IMR-90 (cell line): ENCODE measurements at regions of chr7 and their contacts with region 1.

Region 1: GRCh38 chr7:17971411-17971810 is 31.1 kb upstream of the SNX13 start:
- DNase-seq: peak; percentile 33
- ATAC-seq: no peak
- H3K4me3 ChIP-seq: no peak overlapping the region
- H3K27ac ChIP-seq: no peak overlapping the region
- H3K4me1 ChIP-seq: no peaks in the 10 kb centered on the region
- H3K27me3 ChIP-seq: no peaks in the 10 kb centered on the region; the same call in 1 of the 2 replicates
- CTCF ChIP-seq: peak; percentile 46
- POLR2A ChIP-seq: no peak
- RAD21 ChIP-seq: peak; percentile 44

Region 2: DNA sequence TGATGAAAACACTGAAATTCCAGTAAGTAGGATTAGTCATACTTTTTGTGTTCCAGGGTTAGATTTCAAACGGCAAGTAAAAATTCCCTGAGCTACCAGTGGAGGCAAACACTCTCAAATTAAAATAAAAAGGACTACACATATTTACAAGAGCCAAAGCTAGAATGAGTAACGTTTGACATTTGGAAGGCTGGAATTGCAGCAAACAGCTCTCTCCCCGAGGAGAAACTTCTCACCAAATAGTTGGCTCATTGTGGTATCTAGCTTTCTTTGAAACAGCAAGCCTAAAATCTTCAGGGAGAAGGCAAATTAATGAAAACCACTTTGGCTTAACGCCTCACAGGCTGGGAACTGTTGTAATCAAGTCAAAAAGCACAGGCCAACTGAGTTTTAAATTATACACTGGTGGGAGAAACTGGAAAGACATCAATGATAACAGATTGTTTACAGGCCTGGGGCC is 319.5 kb before region 1 on chr7:
- CTCF ChIA-PET with region 1: no interaction called
- POLR2A ChIA-PET with region 1: no interaction called
- dilution Hi-C with region 1: no loop called
- in situ Hi-C with region 1: no loop called
- intact Hi-C with region 1: no loop called
- DNase-seq: peak; percentile 90
- ATAC-seq: peak; percentile 94
- H3K4me3 ChIP-seq: no peak overlapping the region
- H3K27ac ChIP-seq: peak overlapping the region; percentile 66
- H3K4me1 ChIP-seq: peaks cover 13% of the 10 kb centered on the region
- H3K27me3 ChIP-seq: no peaks in the 10 kb centered on the region
- CTCF ChIP-seq: peak; percentile 46
- POLR2A ChIP-seq: no peak
- RAD21 ChIP-seq: peak; percentile 27

Region 3: DNA sequence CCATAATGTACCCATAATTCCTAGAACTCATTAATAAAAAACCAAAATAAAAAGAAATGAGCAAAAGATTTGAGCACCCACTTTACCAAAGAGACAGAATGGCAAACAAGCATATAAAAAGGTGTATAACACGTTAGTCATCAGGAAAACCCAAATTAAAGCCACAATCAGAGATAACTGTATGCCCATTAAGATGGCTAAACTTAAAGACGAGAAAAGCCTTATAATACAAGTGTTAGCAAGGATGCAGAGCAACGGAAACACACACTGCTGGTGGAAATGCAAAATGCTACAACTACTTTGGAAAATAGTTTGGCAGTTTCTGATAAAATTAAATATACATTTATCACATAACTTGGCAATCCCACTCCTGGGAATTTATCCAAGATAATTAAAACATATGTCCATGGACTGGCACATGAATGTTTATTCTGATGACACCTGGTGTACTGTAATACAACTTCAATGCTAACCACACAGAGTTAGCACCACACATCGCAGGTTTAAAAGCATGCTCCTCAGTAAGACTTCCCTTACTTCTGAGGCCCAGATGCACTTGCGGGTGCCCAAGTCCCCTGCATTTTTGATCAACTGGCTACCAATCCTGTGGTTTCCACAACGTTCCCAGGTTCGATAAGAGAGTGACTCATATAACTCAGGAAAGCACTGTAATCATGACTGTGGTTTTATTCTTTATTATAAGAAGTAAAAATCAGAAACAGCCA is 189.8 kb before region 1 on chr7:
- CTCF ChIA-PET with region 1: no interaction called
- POLR2A ChIA-PET with region 1: no interaction called
- dilution Hi-C with region 1: no loop called
- in situ Hi-C with region 1: no loop called
- intact Hi-C with region 1: no loop called
- DNase-seq: peak; percentile 90
- ATAC-seq: peak; percentile 74
- H3K4me3 ChIP-seq: no peak overlapping the region
- H3K27ac ChIP-seq: no peak overlapping the region
- H3K4me1 ChIP-seq: 0 out of 2 replicates have a peak, but pooled peaks cover 1% of the 10 kb centered on the region
- H3K27me3 ChIP-seq: no peaks in the 10 kb centered on the region
- CTCF ChIP-seq: no peak
- POLR2A ChIP-seq: no peak
- RAD21 ChIP-seq: no peak

Region 4: GRCh38 chr7:18096087-18096486 is 124.7 kb after region 1 on chr7:
- CTCF ChIA-PET with region 1: no interaction called
- POLR2A ChIA-PET with region 1: no interaction called
- dilution Hi-C with region 1: no loop called
- in situ Hi-C with region 1: no loop called
- intact Hi-C with region 1: loop called (anchors 10 kb)
- DNase-seq: no peak
- ATAC-seq: no peak
- H3K4me3 ChIP-seq: no peak overlapping the region
- H3K27ac ChIP-seq: no peak overlapping the region
- H3K4me1 ChIP-seq: no peaks in the 10 kb centered on the region
- H3K27me3 ChIP-seq: peaks cover 5% of the 10 kb centered on the region; the same call in 1 of the 2 replicates
- CTCF ChIP-seq: no peak
- POLR2A ChIP-seq: no peak
- RAD21 ChIP-seq: no peak

Region 5: GRCh38 chr7:18119985-18120384 is 148.6 kb after region 1 on chr7:
- CTCF ChIA-PET with region 1: no interaction called
- POLR2A ChIA-PET with region 1: no interaction called
- dilution Hi-C with region 1: no loop called
- in situ Hi-C with region 1: no loop called
- intact Hi-C with region 1: loop called (anchors 1 kb)
- DNase-seq: peak; percentile 19
- ATAC-seq: peak; percentile 60
- H3K4me3 ChIP-seq: no peak overlapping the region
- H3K27ac ChIP-seq: no peak overlapping the region
- H3K4me1 ChIP-seq: no peaks in the 10 kb centered on the region
- H3K27me3 ChIP-seq: peaks cover 1% of the 10 kb centered on the region; the same call in 1 of the 2 replicates
- CTCF ChIP-seq: peak; percentile 36
- POLR2A ChIP-seq: no peak
- RAD21 ChIP-seq: peak; percentile 53

Region 6: DNA sequence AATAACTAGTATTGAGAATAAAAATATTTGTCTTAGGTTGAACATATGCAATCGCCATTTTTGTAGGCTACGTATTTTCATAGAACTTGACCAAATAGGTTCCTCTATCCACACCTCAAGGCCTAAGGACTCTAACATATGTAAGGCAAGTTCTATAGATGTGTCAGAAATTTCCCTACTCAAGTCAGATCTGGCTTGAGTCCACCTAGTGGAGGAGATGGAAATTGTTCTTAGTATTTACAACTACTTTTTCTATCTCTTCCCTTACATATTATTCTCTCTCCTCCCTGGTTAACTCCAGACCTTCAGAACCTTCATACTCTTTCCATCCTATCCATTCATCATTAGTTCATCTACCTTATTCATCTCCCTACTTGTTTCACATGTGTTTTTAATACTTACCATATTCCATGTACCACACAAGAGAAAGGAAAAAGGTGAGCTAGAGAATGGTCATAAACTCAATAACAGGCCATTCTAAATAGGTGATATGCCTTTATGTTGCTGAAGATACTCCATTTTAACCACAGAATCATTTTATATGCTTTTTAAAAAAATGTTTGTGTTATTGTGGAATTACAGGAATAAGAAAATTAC is 349.7 kb after region 1 on chr7:
- CTCF ChIA-PET with region 1: no interaction called
- POLR2A ChIA-PET with region 1: no interaction called
- dilution Hi-C with region 1: no loop called
- in situ Hi-C with region 1: loop called (anchors 10 kb)
- intact Hi-C with region 1: loop called (anchors 1 kb)
- DNase-seq: peak; percentile 58
- ATAC-seq: peak; percentile 87
- H3K4me3 ChIP-seq: no peak overlapping the region
- H3K27ac ChIP-seq: no peak overlapping the region
- H3K4me1 ChIP-seq: no peaks in the 10 kb centered on the region
- H3K27me3 ChIP-seq: 0 out of 2 replicates have a peak, but pooled peaks cover 2% of the 10 kb centered on the region
- CTCF ChIP-seq: peak; percentile 58
- POLR2A ChIP-seq: no peak
- RAD21 ChIP-seq: peak; percentile 56

Region 7: GRCh38 chr7:18345641-18346234 is 374.3 kb after region 1 on chr7:
- CTCF ChIA-PET with region 1: interaction called, 4 read pairs
- POLR2A ChIA-PET with region 1: no interaction called
- dilution Hi-C with region 1: no loop called
- in situ Hi-C with region 1: no loop called
- intact Hi-C with region 1: loop called (anchors 1 kb)
- DNase-seq: peak; percentile 46
- ATAC-seq: peak; percentile 49; the same call in 1 of the 2 replicates
- H3K4me3 ChIP-seq: no peak overlapping the region
- H3K27ac ChIP-seq: no peak overlapping the region
- H3K4me1 ChIP-seq: no peaks in the 10 kb centered on the region
- H3K27me3 ChIP-seq: no peaks in the 10 kb centered on the region
- CTCF ChIP-seq: peak; percentile 78
- POLR2A ChIP-seq: no peak
- RAD21 ChIP-seq: peak; percentile 73